ENCODE measurements at regions of chr18 and their contacts with region 1.

Region 1: GRCh38 chr18:3129053-3129864 is 90.5 kb downstream of the MYOM1 start:
- DNase-seq: peak; percentile 89
- ATAC-seq: peak; percentile 100
- H3K4me3 Mint-ChIP-seq: no peak overlapping the region
- H3K27ac Mint-ChIP-seq: no peak overlapping the region
- H3K4me1 Mint-ChIP-seq: peaks cover 10% of the 10 kb centered on the region
- H3K27me3 Mint-ChIP-seq: no peaks in the 10 kb centered on the region

Region 2: GRCh38 chr18:2985628-2986027 is 143.6 kb before region 1 on chr18:
- CTCF ChIA-PET with region 1: interaction called, 23 read pairs
- POLR2A ChIA-PET with region 1: no interaction called
- DNase-seq: no peak
- ATAC-seq: peak; percentile 36
- H3K4me3 Mint-ChIP-seq: no peak overlapping the region
- H3K27ac Mint-ChIP-seq: no peak overlapping the region
- H3K4me1 Mint-ChIP-seq: peaks cover 66% of the 10 kb centered on the region
- H3K27me3 Mint-ChIP-seq: no peaks in the 10 kb centered on the region

Region 3: GRCh38 chr18:3093624-3094337 is 35.5 kb before region 1 on chr18:
- CTCF ChIA-PET with region 1: interaction called, 17 read pairs
- POLR2A ChIA-PET with region 1: no interaction called
- DNase-seq: no peak
- ATAC-seq: no peak
- H3K4me3 Mint-ChIP-seq: no peak overlapping the region
- H3K27ac Mint-ChIP-seq: no peak overlapping the region
- H3K4me1 Mint-ChIP-seq: peaks cover 31% of the 10 kb centered on the region
- H3K27me3 Mint-ChIP-seq: no peaks in the 10 kb centered on the region

Region 4: DNA sequence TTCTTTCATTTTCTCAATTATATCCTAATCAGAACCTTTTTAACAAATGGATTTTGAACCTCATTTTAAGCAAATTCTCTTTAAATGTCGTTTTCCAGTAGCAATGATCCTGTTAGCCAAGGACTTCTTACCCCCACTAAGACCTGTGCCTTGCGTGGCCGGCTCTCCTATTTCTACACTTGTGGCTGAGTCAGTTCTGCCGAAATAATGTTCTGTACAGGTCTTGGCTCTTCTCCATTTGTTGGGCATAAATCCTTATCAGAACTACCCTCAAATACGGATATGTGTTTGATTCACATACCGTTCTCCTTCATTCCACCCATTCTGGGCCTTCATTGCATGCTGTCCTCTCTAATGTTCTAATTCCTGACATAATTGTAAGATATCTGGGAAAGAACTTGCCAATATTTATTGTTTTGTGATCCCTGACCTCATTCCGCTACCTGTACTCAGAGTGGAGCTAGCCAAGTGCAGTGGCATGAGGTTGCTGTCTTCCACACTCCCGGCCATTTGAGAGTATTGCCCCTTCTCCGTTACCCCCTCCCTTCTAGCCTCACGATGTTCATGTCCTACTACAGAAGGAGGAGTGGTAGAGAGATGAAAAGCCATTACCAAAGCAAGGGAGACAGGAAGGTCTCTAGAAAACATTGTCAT is 11.9 kb after region 1 on chr18:
- CTCF ChIA-PET with region 1: interaction called, 10 read pairs
- POLR2A ChIA-PET with region 1: no interaction called
- DNase-seq: no peak
- ATAC-seq: no peak
- H3K4me3 Mint-ChIP-seq: no peak overlapping the region
- H3K27ac Mint-ChIP-seq: no peak overlapping the region
- H3K4me1 Mint-ChIP-seq: no peaks in the 10 kb centered on the region
- H3K27me3 Mint-ChIP-seq: no peaks in the 10 kb centered on the region

Region 5: DNA sequence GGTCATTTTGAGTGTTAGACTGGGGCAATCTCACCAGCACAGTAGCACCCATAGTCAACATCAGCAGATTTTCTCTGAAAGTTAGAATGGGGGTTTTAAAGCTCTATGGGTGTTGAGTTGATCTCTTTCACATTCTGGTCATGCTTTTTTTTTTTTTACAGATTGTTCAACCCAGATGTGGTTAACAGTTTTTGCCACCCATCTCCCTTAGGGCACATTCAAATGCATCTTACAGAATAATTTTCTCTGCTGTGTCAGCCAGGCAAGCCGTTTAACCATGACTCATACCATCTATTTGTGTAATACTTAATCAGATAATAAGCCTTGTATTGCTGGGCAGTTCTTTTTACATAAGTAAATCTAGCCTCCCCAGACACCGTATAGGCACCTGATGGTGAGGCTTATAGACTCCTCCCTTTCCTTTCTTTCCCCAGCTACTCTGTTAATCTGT is 382.7 kb after region 1 on chr18:
- CTCF ChIA-PET with region 1: no interaction called
- POLR2A ChIA-PET with region 1: no interaction called
- DNase-seq: no peak
- ATAC-seq: peak; percentile 60
- H3K4me3 Mint-ChIP-seq: no peak overlapping the region
- H3K27ac Mint-ChIP-seq: no peak overlapping the region
- H3K4me1 Mint-ChIP-seq: peaks cover 10% of the 10 kb centered on the region
- H3K27me3 Mint-ChIP-seq: peaks cover 2% of the 10 kb centered on the region